ENCODE measurements at regions of chr5 and their contacts with region 1.

Region 1: DNA sequence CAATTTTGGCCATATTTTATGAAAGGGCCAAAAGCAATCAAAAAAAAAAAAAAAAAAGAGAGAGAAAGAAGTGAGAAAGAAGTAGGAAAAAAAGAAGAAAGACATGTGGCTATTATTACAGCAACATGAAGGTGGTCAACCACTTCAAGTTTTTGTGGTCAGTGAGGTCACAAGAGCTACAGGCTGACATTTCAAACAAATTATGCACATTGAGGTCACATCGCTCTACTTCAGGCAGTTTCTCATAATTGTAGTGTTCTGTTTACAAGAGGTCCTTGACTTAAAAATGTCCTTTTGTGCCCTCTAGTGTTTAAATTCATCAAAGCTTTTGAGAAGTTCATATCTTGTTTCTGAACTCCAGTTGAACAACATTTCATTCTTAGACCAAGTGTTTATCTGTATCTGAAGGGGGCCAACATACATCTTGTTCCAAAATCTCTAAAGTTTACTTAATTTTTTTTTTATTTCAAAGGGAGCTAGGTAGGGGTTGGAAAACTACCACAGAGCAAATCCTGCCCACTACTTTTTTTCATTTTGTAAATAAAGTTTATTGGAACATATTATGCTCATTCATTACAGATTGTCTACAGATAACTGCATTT is 513.1 kb downstream of the PDE4D start:
- DNase-seq: peak; percentile 52
- H3K4me3 ChIP-seq: no peak overlapping the region
- CTCF ChIP-seq: peak; percentile 19

Region 2: GRCh38 chr5:59174248-59174844 is 206.1 kb before region 1 on chr5:
- CTCF ChIA-PET with region 1: interaction called, 11 read pairs
- POLR2A ChIA-PET with region 1: no interaction called
- DNase-seq: peak; percentile 59
- H3K4me3 ChIP-seq: no peak overlapping the region
- CTCF ChIP-seq: peak; percentile 75

Region 3: DNA sequence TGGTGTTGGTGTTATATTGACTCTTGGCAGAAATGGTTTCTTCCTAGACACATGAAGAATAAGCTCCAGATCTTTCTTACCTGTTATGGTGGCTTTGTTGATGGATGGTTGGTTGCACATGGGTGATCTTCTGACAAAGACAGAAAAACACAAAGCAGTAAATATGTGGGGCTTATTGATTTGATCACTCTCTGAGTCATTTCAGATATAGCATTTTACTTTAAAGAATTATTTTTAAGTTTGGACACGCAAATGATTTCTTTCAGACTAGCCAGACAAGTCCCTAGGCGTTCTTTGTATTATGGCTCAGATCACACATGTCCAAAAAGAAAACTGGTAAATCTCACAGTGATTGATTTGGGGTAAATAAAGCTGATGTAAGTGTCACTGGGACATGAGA is 199.9 kb before region 1 on chr5:
- CTCF ChIA-PET with region 1: interaction called, 367 read pairs
- POLR2A ChIA-PET with region 1: no interaction called
- DNase-seq: no peak
- H3K4me3 ChIP-seq: no peak overlapping the region
- CTCF ChIP-seq: no peak

Region 4: GRCh38 chr5:59198365-59198764 is 182.1 kb before region 1 on chr5:
- CTCF ChIA-PET with region 1: interaction called, 367 read pairs
- POLR2A ChIA-PET with region 1: no interaction called
- DNase-seq: no peak
- H3K4me3 ChIP-seq: no peak overlapping the region
- CTCF ChIP-seq: no peak

Region 5: DNA sequence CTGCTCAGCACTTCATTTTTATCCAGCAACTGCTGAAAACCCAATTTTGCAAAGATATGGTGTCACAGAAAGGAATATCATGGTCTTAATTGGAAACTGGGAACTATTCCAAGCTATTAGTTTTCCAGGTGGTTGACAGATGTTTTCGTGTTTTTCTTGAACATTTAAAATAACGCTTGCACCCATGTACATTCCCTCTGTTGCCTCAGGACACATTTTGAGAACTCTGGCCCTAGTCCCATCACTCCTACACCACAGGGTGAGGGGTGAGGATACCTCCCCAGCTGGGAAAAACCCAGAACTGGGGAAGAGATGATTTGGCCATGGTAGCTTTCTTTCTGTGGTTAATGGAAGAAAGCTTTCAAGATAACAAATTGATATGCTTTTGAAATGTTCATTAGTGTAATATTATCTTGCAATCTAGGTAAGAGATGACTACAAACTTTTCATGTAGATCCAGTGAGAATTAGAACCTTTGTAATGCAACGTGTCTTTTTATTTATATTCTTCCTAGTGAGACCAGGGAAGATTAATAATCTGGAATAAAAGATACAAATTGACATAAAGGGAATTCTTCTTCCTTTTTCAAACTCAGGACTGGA is 170.6 kb before region 1 on chr5:
- CTCF ChIA-PET with region 1: interaction called, 25 read pairs
- POLR2A ChIA-PET with region 1: no interaction called
- DNase-seq: no peak
- H3K4me3 ChIP-seq: no peak overlapping the region
- CTCF ChIP-seq: no peak

Region 6: GRCh38 chr5:59218424-59219045 is 161.9 kb before region 1 on chr5:
- CTCF ChIA-PET with region 1: interaction called, 26 read pairs
- POLR2A ChIA-PET with region 1: no interaction called
- DNase-seq: no peak
- H3K4me3 ChIP-seq: no peak overlapping the region
- CTCF ChIP-seq: no peak

Region 7: GRCh38 chr5:59799668-59800346 is 419.4 kb after region 1 on chr5:
- CTCF ChIA-PET with region 1: interaction called, 11 read pairs
- POLR2A ChIA-PET with region 1: no interaction called
- DNase-seq: no peak
- H3K4me3 ChIP-seq: no peak overlapping the region
- CTCF ChIP-seq: peak; percentile 30